AG04449 (cell line): ENCODE measurements at regions of chr5 and their contacts with region 1.

Region 1: GRCh38 chr5:151447174-151448037 is at the start of gene SLC36A1:
- DNase-seq: no peak
- H3K4me3 ChIP-seq: peak within 1 kb of the TSS; percentile 96
- CTCF ChIP-seq: peak; percentile 93

Region 2: GRCh38 chr5:151284392-151284967 is 162.9 kb before region 1 on chr5:
- CTCF ChIA-PET with region 1: no interaction called
- POLR2A ChIA-PET with region 1: no interaction called
- DNase-seq: no peak
- H3K4me3 ChIP-seq: no peak overlapping the region
- CTCF ChIP-seq: no peak

Region 3: DNA sequence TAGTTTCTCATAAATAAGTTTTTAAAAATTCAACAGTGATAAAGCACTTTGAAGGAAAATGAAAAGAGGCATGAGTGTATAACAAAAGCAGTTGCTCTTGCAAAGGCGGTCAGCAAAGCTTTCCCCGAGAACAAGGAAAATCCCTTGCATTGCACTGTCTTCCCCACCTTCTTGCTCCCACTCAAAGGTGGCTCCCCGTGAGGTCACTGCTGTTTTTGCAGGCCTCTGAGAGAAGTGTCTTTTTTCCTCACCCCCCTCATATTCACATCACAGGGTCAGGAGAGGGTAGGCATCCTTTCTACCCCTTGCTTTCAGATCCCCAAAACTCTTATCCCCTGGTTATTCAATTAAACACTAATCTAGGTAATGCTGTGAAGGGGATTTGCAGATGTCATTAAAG is 15.2 kb before region 1 on chr5:
- CTCF ChIA-PET with region 1: interaction called, 20 read pairs
- POLR2A ChIA-PET with region 1: interaction called, 3 read pairs
- DNase-seq: no peak
- H3K4me3 ChIP-seq: no peak overlapping the region
- CTCF ChIP-seq: no peak

Region 4: GRCh38 chr5:151463137-151464029 is 16.0 kb after region 1 on chr5:
- CTCF ChIA-PET with region 1: interaction called, 97 read pairs
- POLR2A ChIA-PET with region 1: no interaction called
- DNase-seq: no peak
- H3K4me3 ChIP-seq: no peak overlapping the region
- CTCF ChIP-seq: peak; percentile 14

Region 5: DNA sequence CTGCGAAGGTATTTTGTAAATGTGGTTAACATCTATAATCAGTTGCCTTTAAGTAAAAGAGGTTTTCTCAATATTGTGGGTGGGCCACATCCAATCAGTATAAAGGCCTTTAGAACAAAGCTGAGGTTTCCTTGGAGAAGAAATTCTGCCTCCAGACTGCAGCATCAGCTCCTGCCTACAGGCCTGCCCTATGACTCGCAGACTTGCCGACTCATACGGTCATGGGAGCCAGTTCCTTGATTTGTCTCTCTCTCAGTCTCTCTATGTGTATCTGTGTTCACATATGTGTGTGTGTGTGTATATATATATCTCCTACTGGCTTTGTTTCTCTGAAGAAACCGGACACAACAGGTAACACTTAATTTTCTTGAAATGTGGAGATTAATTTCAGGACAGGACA is 45.3 kb after region 1 on chr5:
- CTCF ChIA-PET with region 1: interaction called, 160 read pairs
- POLR2A ChIA-PET with region 1: interaction called, 6 read pairs
- DNase-seq: peak; percentile 36
- H3K4me3 ChIP-seq: no peak overlapping the region
- CTCF ChIP-seq: no peak

Region 6: DNA sequence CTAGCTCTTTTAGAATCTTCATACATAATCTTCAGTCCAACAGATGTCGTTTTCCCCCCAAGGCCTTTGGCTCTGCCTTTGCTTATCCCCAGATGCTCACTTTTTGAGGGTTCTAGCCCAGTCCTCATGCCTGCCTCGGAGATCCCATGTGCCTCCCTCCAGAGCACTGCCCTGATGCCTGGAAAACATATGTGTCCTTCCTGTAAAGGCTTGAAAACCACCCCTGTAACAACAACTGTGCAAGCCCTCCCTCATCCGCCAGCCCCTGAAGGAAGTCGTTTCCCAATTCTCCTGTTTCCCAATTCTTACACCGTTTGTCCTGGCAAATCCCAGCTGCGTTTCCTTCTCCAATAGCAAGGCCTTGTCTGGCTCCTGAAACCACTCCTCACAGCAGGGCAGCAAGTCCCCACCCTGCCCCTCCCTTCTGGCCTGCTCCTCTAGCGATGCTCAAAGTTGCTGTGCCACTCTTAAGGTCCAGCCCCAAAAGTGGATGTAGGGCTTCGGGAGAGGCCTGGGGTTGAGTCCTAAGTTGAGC is 52.2 kb after region 1 on chr5:
- CTCF ChIA-PET with region 1: interaction called, 160 read pairs
- POLR2A ChIA-PET with region 1: no interaction called
- DNase-seq: no peak
- H3K4me3 ChIP-seq: no peak overlapping the region
- CTCF ChIP-seq: no peak

Region 7: DNA sequence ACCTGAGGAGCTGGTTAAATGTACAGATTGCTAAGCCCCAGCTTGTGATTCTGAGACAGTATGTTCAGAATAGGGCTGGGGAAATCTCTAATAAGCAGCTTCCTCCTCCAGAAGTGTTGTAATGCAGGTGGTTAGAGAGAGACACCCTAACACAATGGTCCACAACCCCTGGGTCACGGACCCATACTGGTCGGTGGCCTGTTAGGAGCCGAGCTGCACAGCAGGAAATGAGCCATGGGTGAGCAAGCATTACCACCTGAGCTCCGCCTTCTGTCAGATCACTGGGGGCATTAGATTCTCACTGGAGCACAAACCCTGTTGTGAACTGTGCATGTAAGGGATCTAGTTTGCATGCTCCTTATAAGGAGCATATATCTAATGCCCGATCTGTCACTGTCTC is 61.8 kb after region 1 on chr5:
- CTCF ChIA-PET with region 1: interaction called, 160 read pairs
- POLR2A ChIA-PET with region 1: no interaction called
- DNase-seq: no peak
- H3K4me3 ChIP-seq: no peak overlapping the region
- CTCF ChIP-seq: no peak

Region 8: DNA sequence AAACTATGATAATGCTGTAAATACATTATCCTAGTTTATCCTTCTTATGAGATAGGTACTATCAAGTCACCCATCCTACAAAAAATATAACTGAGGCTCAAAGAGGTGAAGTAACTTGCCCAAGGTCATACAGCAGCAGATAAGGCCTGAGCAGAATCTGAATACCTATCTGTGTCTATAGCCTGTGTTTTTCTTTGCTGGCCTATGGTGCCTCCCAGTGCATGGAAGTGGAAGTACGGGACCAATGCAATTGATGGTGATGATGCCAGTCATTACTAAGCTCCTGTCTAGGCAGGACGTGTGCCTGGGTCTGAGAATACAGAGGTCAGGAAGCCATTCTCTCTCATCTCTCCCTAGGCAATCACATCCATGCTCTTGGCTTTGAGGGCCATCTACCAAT is 75.9 kb after region 1 on chr5:
- CTCF ChIA-PET with region 1: interaction called, 60 read pairs
- POLR2A ChIA-PET with region 1: no interaction called
- DNase-seq: no peak
- H3K4me3 ChIP-seq: no peak overlapping the region
- CTCF ChIP-seq: peak; percentile 52

Region 9: GRCh38 chr5:151862811-151863472 is 415.5 kb after region 1 on chr5:
- CTCF ChIA-PET with region 1: no interaction called
- POLR2A ChIA-PET with region 1: no interaction called
- DNase-seq: no peak
- H3K4me3 ChIP-seq: no peak overlapping the region
- CTCF ChIP-seq: no peak